Right cardiac atrium (tissue), 5 donors: ENCODE measurements at regions of chr5 and their contacts with region 1.

Region 1: GRCh38 chr5:67095346-67096171 is 101.0 kb downstream of the CD180 start:
- DNase-seq: peak; percentile 85 to 91 (median 87)
- ATAC-seq: peak; percentile 97 to 98
- H3K4me3 ChIP-seq: peak overlapping the region; percentile 12
- H3K27ac ChIP-seq: peak overlapping the region; percentile 57
- H3K4me1 ChIP-seq: peaks cover 7% of the 10 kb centered on the region
- H3K27me3 ChIP-seq: no peaks in the 10 kb centered on the region

Region 2: GRCh38 chr5:66987949-66988838 is 107.4 kb before region 1 on chr5:
- intact Hi-C with region 1: loop called in 1 of 4 experiments (anchors 10 kb)
- DNase-seq: no peak
- ATAC-seq: peak; percentile 49 to 50
- H3K4me3 ChIP-seq: no peak overlapping the region
- H3K27ac ChIP-seq: no peak overlapping the region
- H3K4me1 ChIP-seq: peaks cover 4% of the 10 kb centered on the region
- H3K27me3 ChIP-seq: no peaks in the 10 kb centered on the region

Region 3: DNA sequence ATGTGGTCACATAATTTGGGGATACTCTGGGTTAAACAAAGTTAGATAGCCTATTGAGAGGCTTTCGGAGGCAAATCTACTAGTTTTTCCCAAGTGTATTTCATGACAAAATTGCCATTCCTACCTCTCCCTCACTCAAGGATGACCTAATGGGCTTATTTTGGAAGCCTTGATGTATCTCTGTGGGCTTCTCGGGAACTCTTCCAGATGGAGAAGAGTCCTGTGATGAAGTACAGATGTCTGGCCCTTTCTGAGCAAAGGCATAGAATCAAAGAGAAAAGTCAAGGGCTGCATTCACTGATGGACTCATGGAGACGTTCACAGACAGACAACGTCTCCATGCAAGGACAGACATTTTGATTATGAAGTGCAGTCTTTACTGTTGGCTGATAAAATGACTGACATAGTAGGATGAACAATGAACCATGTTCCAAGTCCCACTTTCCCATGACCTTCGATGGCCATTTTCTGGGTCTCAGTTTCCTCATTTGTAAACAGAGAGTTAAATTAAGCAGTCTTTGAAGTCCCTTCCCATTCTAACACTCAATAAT is 448.2 kb after region 1 on chr5:
- intact Hi-C with region 1: no loop called
- DNase-seq: no peak
- ATAC-seq: no peak
- H3K4me3 ChIP-seq: no peak overlapping the region
- H3K27ac ChIP-seq: no peak overlapping the region
- H3K4me1 ChIP-seq: no peaks in the 10 kb centered on the region
- H3K27me3 ChIP-seq: no peaks in the 10 kb centered on the region